HEK293T (cell line): ENCODE measurements at regions of chr17 and their contacts with region 1.

Region 1: DNA sequence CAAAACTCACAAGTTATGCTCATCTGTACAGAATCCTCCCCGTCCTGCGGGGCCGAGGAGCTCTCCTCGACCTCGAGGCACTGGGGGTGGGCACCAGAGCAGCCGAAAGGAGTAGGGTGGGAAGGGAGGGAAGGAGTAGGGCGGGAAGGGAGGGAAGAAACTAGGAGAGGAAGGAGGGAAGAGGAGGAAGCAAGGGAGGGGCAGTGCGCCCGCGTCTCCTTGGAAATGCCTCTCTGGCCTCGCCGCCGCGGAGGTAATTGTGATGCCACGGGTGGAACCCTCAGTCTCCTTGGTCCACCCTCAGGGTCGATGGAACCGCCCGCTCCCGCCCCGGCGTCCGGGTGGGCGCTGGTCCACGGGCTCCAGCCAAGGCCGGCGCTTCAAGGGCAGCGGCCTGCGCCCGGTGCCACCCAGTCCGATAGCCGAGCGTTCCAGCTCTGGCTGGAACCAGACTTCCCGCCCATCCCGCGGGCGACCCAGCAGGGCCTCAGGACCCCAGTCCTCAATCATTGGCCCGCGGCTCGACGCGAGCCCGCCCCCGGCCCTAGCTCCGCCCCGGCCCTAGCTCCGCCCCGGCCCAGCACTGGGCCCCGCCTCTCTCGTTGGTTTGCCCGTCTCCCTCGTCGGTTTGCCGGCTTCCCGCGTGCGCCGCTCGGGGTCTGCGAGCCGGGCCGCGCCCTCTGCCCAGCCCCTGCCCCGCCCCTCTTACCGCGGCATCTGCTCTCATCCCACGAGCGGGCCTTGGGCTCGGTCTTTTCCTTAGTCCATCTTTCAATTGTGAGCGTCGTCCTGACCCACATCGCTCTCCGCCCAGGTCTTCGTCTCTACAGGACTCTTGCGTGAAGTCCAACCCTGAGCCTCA is 596 bp downstream of the PROCA1 start:
- DNase-seq: peak; percentile 85

Region 2: GRCh38 chr17:28500712-28501379 is 210.2 kb before region 1 on chr17:
- CTCF ChIA-PET with region 1: no interaction called
- POLR2A ChIA-PET with region 1: no interaction called
- DNase-seq: no peak

Region 3: GRCh38 chr17:28644985-28645939 is 65.8 kb before region 1 on chr17 and contains the start of gene BLTP2:
- CTCF ChIA-PET with region 1: interaction called, 3 read pairs
- POLR2A ChIA-PET with region 1: interaction called, 27 read pairs
- DNase-seq: peak; percentile 92

Region 4: GRCh38 chr17:28661635-28662537 is 49.2 kb before region 1 on chr17 and contains the starts of genes SDF2 and SUPT6H:
- CTCF ChIA-PET with region 1: no interaction called
- POLR2A ChIA-PET with region 1: interaction called, 22 read pairs
- DNase-seq: peak; percentile 89

Region 5: GRCh38 chr17:28682658-28683057 is 28.4 kb before region 1 on chr17:
- CTCF ChIA-PET with region 1: no interaction called
- POLR2A ChIA-PET with region 1: interaction called, 14 read pairs
- DNase-seq: no peak

Region 6: DNA sequence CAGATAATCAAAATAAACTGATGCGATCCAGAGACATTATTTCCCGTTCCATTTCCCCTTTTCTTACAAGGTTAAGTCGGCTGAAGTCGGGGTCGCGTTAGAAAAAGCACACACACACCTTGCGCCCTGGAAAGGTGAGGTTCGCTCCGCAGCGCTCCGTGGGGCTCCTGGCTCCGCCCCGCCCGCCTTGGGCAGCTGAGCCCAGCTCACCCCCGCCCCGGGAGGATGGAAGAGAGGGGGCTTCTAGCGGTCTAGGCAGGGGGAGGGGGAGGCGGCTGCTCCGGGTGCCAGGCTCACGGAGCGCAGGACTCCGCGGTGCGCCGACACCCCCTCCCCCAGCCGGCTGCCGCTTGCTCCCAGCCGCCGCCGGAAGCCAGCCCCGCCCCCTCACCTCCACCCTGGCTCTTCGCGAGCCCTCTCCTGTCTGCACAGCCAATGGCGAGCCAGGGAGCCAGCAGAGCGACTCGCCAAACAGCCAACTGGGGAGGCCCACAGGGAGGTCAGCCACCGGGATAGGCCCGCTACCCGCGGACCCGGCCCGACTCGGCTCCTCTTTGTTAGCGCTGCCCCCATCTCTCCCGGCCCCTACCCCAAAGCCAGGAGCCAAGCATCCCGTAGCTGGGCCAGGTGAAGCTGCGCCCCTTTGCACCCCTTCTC is 101.1 kb after region 1 on chr17:
- CTCF ChIA-PET with region 1: no interaction called
- POLR2A ChIA-PET with region 1: interaction called, 10 read pairs
- DNase-seq: peak; percentile 92